Naive thymus-derived CD4-positive, alpha-beta T cell (primary cell): ENCODE measurements at regions of chr4 and their contacts with region 1.

Region 1: DNA sequence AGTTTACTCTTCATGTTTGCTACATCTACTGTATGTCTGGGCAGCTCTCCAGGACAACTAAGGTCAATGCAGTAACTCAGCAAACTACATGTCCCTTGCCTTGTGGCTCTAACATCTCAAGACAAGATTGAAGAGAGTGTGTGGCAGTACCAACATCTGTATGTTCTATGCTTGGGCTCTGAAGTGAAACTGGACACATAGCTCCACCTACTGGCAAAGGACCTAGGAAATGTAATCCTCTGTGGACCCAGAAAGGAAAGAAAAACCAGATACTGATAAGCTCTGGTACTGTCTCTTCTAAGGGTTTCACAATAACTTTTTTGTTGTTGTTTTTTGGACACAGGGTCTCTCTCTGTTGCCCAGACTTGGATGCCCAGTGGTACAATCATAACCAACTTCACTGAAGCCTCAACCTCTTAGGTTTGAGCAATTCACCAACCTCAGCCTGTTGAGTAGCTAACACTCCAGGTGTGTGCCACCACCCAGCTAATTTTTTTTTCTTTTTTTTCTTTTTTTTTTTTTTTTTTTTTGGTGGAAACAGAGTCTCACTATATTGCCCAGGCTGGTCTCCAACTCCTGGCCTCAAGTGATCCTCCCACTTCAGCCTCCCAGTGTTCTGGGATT is 64.1 kb downstream of the QDPR start:
- DNase-seq: peak in 8 of 9 donors; percentile 25 to 63 (median 52)
- ATAC-seq: peak; percentile 83
- H3K4me3 ChIP-seq: no peak overlapping the region
- H3K4me3 Mint-ChIP-seq: no peak overlapping the region
- H3K27ac ChIP-seq: no peak overlapping the region
- H3K27ac Mint-ChIP-seq: no peak overlapping the region
- H3K4me1 ChIP-seq: no peaks in the 10 kb centered on the region
- H3K4me1 Mint-ChIP-seq: peaks cover 0 to 5% (median 0%) of the 10 kb centered on the region in 7 donors
- H3K27me3 ChIP-seq: no peaks in the 10 kb centered on the region
- H3K27me3 Mint-ChIP-seq: peaks cover 3 to 6% (median 4%) of the 10 kb centered on the region in 5 donors

Region 2: DNA sequence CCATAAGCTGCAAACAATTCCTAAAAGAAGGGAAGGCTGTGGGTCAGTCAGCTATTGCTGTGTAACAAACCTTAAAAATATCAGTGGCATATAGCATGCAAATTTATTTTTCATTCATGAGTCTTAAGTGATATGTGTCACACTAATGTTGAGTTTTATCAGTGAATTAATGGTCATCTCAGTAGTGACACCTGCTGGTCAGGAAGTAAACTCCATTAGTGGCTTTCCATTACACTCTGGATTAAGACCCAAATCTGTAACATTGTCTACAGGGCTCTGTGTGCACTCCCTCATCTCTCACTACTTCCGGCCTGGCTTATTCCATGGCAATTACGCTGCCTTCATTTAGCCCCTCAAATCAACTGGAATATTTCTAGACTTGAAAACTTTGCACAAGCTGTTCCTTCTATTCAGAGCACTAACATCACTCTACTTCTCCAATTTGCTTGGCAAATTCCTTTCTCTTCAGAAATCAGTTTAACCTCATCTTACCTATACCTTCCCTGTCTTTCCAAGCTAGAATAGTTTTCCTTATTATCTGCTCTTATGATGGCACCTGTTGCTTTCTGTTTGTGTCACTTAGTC is 1004.2 kb before region 1 on chr4:
- CTCF ChIA-PET with region 1: no interaction called
- POLR2A ChIA-PET with region 1: no interaction called
- intact Hi-C with region 1: loop called in 1 of 2 experiments (anchors 2 kb)
- DNase-seq: peak in 2 of 9 donors; percentile 1 to 12
- ATAC-seq: no peak
- H3K4me3 ChIP-seq: no peak overlapping the region
- H3K4me3 Mint-ChIP-seq: no peak overlapping the region
- H3K27ac ChIP-seq: no peak overlapping the region
- H3K27ac Mint-ChIP-seq: no peak overlapping the region
- H3K4me1 ChIP-seq: no peaks in the 10 kb centered on the region
- H3K4me1 Mint-ChIP-seq: no peaks in the 10 kb centered on the region
- H3K27me3 ChIP-seq: no peaks in the 10 kb centered on the region
- H3K27me3 Mint-ChIP-seq: peaks cover 0 to 16% (median 8%) of the 10 kb centered on the region in 5 donors

Region 3: GRCh38 chr4:16916719-16917337 is 531.0 kb before region 1 on chr4:
- CTCF ChIA-PET with region 1: no interaction called
- POLR2A ChIA-PET with region 1: no interaction called
- intact Hi-C with region 1: loop called (anchors 1 kb)
- DNase-seq: peak; percentile 24 to 77 (median 58)
- ATAC-seq: peak; percentile 95
- H3K4me3 ChIP-seq: no peak overlapping the region
- H3K4me3 Mint-ChIP-seq: no peak overlapping the region
- H3K27ac ChIP-seq: no peak overlapping the region
- H3K27ac Mint-ChIP-seq: no peak overlapping the region
- H3K4me1 ChIP-seq: no peaks in the 10 kb centered on the region
- H3K4me1 Mint-ChIP-seq: peaks cover 0 to 4% (median 0%) of the 10 kb centered on the region in 7 donors
- H3K27me3 ChIP-seq: no peaks in the 10 kb centered on the region
- H3K27me3 Mint-ChIP-seq: peaks cover 0 to 4% (median 0%) of the 10 kb centered on the region in 5 donors

Region 4: DNA sequence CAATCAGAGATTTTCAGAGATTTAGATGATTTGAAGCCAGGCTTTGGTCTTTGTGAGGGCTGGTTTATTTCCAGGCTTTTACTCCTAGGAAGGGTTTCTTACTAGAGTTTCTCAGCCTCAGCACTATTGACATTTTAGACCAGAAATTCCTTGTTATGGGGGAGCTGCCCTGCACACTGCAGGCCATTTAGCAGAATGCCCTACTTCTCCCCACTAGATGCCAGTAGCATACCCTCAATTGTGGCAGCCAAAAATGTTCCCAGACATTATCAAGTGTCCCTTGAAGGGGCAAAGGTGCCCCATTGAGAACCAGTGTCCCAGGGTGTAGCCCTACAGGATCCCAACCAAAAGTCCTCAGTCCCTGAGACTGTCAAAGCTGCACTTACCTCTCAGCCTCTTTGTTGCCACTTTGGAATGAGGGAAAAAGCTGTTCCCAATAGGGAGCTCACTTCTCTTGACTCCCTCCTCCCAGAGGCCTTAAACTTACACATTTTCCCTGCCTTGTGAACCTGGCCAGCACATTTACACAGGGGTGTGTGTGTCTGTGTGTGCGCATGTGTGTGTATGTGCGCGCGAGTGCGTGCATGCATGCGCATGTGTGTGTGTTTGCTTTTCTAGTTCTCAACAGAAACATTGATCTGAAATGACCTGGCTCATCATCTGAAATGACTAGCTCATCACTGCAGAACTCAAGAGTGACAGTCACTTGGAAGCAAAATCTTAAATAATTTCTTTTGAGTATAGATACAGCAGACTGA is 167.3 kb before region 1 on chr4:
- CTCF ChIA-PET with region 1: no interaction called
- POLR2A ChIA-PET with region 1: no interaction called
- intact Hi-C with region 1: loop called in 1 of 2 experiments (anchors 1 kb)
- DNase-seq: no peak
- ATAC-seq: no peak
- H3K4me3 ChIP-seq: no peak overlapping the region
- H3K4me3 Mint-ChIP-seq: no peak overlapping the region
- H3K27ac ChIP-seq: no peak overlapping the region
- H3K27ac Mint-ChIP-seq: no peak overlapping the region
- H3K4me1 ChIP-seq: no peaks in the 10 kb centered on the region
- H3K4me1 Mint-ChIP-seq: no peaks in the 10 kb centered on the region
- H3K27me3 ChIP-seq: no peaks in the 10 kb centered on the region
- H3K27me3 Mint-ChIP-seq: peaks cover 0 to 11% (median 0%) of the 10 kb centered on the region in 5 donors

Region 5: GRCh38 chr4:17347445-17347844 is 100.3 kb before region 1 on chr4:
- CTCF ChIA-PET with region 1: interaction called, 4 read pairs
- POLR2A ChIA-PET with region 1: no interaction called
- intact Hi-C with region 1: loop called (anchors 1 kb)
- DNase-seq: peak in 6 of 9 donors; percentile 14 to 34 (median 20)
- ATAC-seq: peak; percentile 40
- H3K4me3 ChIP-seq: no peak overlapping the region
- H3K4me3 Mint-ChIP-seq: no peak overlapping the region
- H3K27ac ChIP-seq: no peak overlapping the region
- H3K27ac Mint-ChIP-seq: no peak overlapping the region
- H3K4me1 ChIP-seq: no peaks in the 10 kb centered on the region
- H3K4me1 Mint-ChIP-seq: no peaks in the 10 kb centered on the region
- H3K27me3 ChIP-seq: no peaks in the 10 kb centered on the region
- H3K27me3 Mint-ChIP-seq: peaks cover 0 to 6% (median 0%) of the 10 kb centered on the region in 5 donors

Region 6: GRCh38 chr4:18105030-18106011 is 657.5 kb after region 1 on chr4:
- CTCF ChIA-PET with region 1: no interaction called
- POLR2A ChIA-PET with region 1: no interaction called
- intact Hi-C with region 1: no loop called
- DNase-seq: no peak
- ATAC-seq: no peak
- H3K4me3 ChIP-seq: no peak overlapping the region
- H3K4me3 Mint-ChIP-seq: no peak overlapping the region
- H3K27ac ChIP-seq: no peak overlapping the region
- H3K27ac Mint-ChIP-seq: no peak overlapping the region
- H3K4me1 ChIP-seq: no peaks in the 10 kb centered on the region
- H3K4me1 Mint-ChIP-seq: no peaks in the 10 kb centered on the region
- H3K27me3 ChIP-seq: no peaks in the 10 kb centered on the region
- H3K27me3 Mint-ChIP-seq: peaks cover 3 to 18% (median 12%) of the 10 kb centered on the region in 5 donors